A549 (cell line): ENCODE measurements at regions of chr11 and their contacts with region 1.

Region 1: GRCh38 chr11:13046637-13047570 is 37.8 kb downstream of the RASSF10 start:
- DNase-seq: no peak
- ATAC-seq: no peak
- H3K4me3 ChIP-seq: no peak overlapping the region
- H3K27ac ChIP-seq: peak overlapping the region in 1 of 2 experiments; percentile 24; a peak in 1 of 6 replicates
- H3K4me1 ChIP-seq: peaks cover 36% of the 10 kb centered on the region
- CTCF ChIP-seq: no peak
- EP300 ChIP-seq: no peak
- POLR2A ChIP-seq: no peak
- RAD21 ChIP-seq: no peak

Region 2: GRCh38 chr11:13061284-13061990 is 14.5 kb after region 1 on chr11:
- CTCF ChIA-PET with region 1: interaction called, 13 read pairs
- POLR2A ChIA-PET with region 1: no interaction called
- DNase-seq: no peak
- ATAC-seq: no peak
- H3K4me3 ChIP-seq: no peak overlapping the region
- H3K27ac ChIP-seq: peak overlapping the region in 1 of 2 experiments; percentile 0; a peak in 1 of 6 replicates
- H3K4me1 ChIP-seq: peaks cover 17% of the 10 kb centered on the region; the same call in 2 of the 3 replicates
- CTCF ChIP-seq: no peak
- EP300 ChIP-seq: no peak
- POLR2A ChIP-seq: no peak
- RAD21 ChIP-seq: no peak